ENCODE measurements at regions of chr1 and their contacts with region 1.

Region 1: GRCh38 chr1:100037927-100038659 is 68.3 kb downstream of the SLC35A3 start:
- DNase-seq: peak; percentile 84
- H3K4me3 Mint-ChIP-seq: peak overlapping the region; percentile 90
- H3K27ac Mint-ChIP-seq: peak overlapping the region; percentile 97
- H3K4me1 Mint-ChIP-seq: peaks cover 18% of the 10 kb centered on the region
- H3K27me3 Mint-ChIP-seq: no peaks in the 10 kb centered on the region
- CTCF ChIP-seq: no peak

Region 2: GRCh38 chr1:99776120-99776519 is 262.0 kb before region 1 on chr1:
- CTCF ChIA-PET with region 1: no interaction called
- POLR2A ChIA-PET with region 1: no interaction called
- intact Hi-C with region 1: no loop called
- DNase-seq: no peak
- H3K4me3 Mint-ChIP-seq: no peak overlapping the region
- H3K27ac Mint-ChIP-seq: no peak overlapping the region
- H3K4me1 Mint-ChIP-seq: peaks cover 5% of the 10 kb centered on the region
- H3K27me3 Mint-ChIP-seq: peaks cover 19% of the 10 kb centered on the region
- CTCF ChIP-seq: no peak

Region 3: DNA sequence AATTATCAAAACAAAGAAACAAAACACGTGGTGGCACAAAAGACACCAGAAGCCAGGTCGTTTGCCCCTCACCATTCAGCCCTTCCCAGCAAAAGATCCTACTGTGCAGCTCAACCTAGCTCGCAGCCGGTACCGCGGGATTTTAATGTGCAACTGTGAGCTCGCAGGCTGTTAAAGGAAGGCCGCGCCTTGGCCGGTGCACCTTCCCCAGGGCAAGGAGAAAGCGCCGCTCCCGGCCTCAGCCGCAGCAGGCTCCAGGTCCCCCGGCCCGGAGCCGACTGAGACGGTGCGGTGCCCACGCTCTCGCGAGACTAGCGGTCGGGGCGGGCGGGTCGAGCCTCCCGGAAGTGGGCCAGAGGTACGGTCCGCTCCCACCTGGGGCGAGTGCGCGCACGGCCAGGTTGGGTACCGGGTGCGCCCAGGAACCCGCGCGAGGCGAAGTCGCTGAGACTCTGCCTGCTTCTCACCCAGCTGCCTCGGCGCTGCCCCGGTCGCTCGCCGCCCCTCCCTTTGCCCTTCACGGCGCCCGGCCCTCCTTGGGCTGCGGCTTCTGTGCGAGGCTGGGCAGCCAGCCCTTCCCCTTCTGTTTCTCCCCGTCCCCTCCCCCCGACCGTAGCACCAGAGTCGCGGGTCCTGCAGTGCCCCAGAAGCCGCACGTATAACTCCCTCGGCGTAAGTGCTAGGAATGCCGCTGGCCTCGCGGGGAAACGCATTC is 188.2 kb before region 1 on chr1 and contains the start of gene AGL:
- CTCF ChIA-PET with region 1: interaction called, 4 read pairs
- POLR2A ChIA-PET with region 1: interaction called, 34 read pairs
- intact Hi-C with region 1: loop called (anchors 2 kb)
- DNase-seq: peak; percentile 84
- H3K4me3 Mint-ChIP-seq: peak within 1 kb of the TSS; percentile 93
- H3K27ac Mint-ChIP-seq: peak within 1 kb of the TSS; percentile 85
- H3K4me1 Mint-ChIP-seq: peaks cover 14% of the 10 kb centered on the region
- H3K27me3 Mint-ChIP-seq: no peaks in the 10 kb centered on the region
- CTCF ChIP-seq: no peak
- total RNA-seq, gene AGL: 8.9 and 9.1 TPM in 2 replicates

Region 4: GRCh38 chr1:100027212-100027611 is 10.9 kb before region 1 on chr1:
- CTCF ChIA-PET with region 1: no interaction called
- POLR2A ChIA-PET with region 1: interaction called, 18 read pairs
- intact Hi-C with region 1: no loop called
- DNase-seq: no peak
- H3K4me3 Mint-ChIP-seq: no peak overlapping the region
- H3K27ac Mint-ChIP-seq: no peak overlapping the region
- H3K4me1 Mint-ChIP-seq: no peaks in the 10 kb centered on the region
- H3K27me3 Mint-ChIP-seq: no peaks in the 10 kb centered on the region
- CTCF ChIP-seq: no peak

Region 5: GRCh38 chr1:100132566-100133477 is 94.7 kb after region 1 on chr1 and contains the starts of genes SASS6 and TRMT13:
- CTCF ChIA-PET with region 1: no interaction called
- POLR2A ChIA-PET with region 1: interaction called, 18 read pairs
- intact Hi-C with region 1: loop called (anchors 2 kb)
- DNase-seq: peak; percentile 98
- H3K4me3 Mint-ChIP-seq: peak within 1 kb of the TSS; percentile 86
- H3K27ac Mint-ChIP-seq: peak within 1 kb of the TSS; percentile 75
- H3K4me1 Mint-ChIP-seq: peaks cover 19% of the 10 kb centered on the region
- H3K27me3 Mint-ChIP-seq: no peaks in the 10 kb centered on the region
- CTCF ChIP-seq: no peak
- total RNA-seq, gene SASS6: 6.6 and 7.5 TPM in 2 replicates
- total RNA-seq, gene TRMT13: 24.2 and 25.5 TPM in 2 replicates

Region 6: GRCh38 chr1:100351095-100351891 is 313.2 kb after region 1 on chr1:
- CTCF ChIA-PET with region 1: no interaction called
- POLR2A ChIA-PET with region 1: interaction called, 4 read pairs
- intact Hi-C with region 1: loop called (anchors 10 kb)
- DNase-seq: peak; percentile 91
- H3K4me3 Mint-ChIP-seq: peak overlapping the region; percentile 92
- H3K27ac Mint-ChIP-seq: peak overlapping the region; percentile 86
- H3K4me1 Mint-ChIP-seq: peaks cover 22% of the 10 kb centered on the region
- H3K27me3 Mint-ChIP-seq: no peaks in the 10 kb centered on the region
- CTCF ChIP-seq: peak; percentile 32

Measured in MCF 10A (cell line).